Calu3 (cell line): ENCODE measurements at regions of chr2 and their contacts with region 1.

Region 1: DNA sequence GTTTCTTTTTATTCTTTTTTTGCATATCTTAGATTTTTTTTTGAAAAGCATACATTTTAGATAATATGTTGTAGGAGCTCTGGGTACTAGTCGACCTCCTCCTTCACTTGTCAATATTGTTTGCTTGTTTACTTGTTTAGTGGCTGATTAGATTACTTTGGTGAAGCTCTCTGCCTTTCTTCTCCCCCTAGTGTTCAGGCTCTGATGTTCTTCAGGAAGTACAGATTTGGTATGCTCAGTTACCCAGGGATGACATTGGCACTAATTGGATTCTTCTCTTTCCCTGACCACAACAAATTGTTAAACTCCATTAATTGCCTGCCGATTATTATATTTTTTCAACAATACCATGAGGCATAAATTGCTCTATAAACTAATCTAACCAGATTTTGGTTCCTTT is 491.2 kb downstream of the SUCLG1 start:
- DNase-seq: no peak
- H3K4me3 Mint-ChIP-seq: no peak overlapping the region
- H3K27ac Mint-ChIP-seq: no peak overlapping the region
- H3K4me1 Mint-ChIP-seq: peaks cover 16% of the 10 kb centered on the region
- H3K27me3 Mint-ChIP-seq: no peaks in the 10 kb centered on the region
- CTCF ChIP-seq: peak; percentile 30

Region 2: GRCh38 chr2:83923531-83923930 is 44.3 kb before region 1 on chr2:
- CTCF ChIA-PET with region 1: no interaction called
- intact Hi-C with region 1: loop called (anchors 5 kb)
- DNase-seq: no peak
- H3K4me3 Mint-ChIP-seq: no peak overlapping the region
- H3K27ac Mint-ChIP-seq: no peak overlapping the region
- H3K4me1 Mint-ChIP-seq: no peaks in the 10 kb centered on the region
- H3K27me3 Mint-ChIP-seq: no peaks in the 10 kb centered on the region
- CTCF ChIP-seq: no peak